ENCODE measurements at regions of chr3 and their contacts with region 1.

Region 1: GRCh38 chr3:85740561-85740960 is 781.8 kb downstream of the CADM2 start:
- DNase-seq: no peak
- ATAC-seq: no peak
- H3K4me3 ChIP-seq: no peak overlapping the region
- H3K27ac ChIP-seq: no peak overlapping the region
- H3K4me1 ChIP-seq: no peaks in the 10 kb centered on the region
- H3K27me3 ChIP-seq: no peaks in the 10 kb centered on the region
- CTCF ChIP-seq: no peak

Region 2: DNA sequence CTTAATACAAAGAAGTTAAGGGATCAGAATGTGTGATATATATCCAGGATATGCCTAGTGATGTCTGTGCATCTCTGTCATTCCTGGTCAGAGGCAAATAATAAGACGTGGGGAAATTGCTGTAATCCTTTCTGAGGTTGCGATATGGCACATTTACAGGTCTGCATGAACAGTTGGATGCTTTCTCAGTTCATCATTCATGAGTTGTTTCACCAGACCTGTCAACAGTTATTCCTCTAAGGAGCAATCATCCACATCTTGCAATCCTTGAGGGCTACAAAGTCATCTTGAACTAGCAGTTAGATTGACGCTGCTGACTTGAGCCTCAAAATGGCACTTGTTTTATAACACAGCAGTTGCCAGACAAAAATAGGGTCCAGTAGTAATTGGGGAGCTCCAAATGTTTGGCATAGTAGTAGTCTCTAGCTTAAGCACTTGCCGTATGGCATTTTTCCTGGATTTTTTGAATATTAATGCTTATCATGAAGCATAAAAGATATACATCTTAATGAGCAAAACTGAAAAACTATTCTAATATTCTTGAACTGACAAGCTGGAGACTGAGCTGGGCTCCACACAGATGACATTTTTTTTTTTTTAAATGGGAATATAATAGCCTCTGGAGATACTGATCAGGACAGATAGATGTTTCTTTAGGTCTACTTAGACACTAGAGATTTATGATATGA is 488.7 kb after region 1 on chr3:
- CTCF ChIA-PET with region 1: no interaction called
- POLR2A ChIA-PET with region 1: no interaction called
- in situ Hi-C with region 1: no loop called
- intact Hi-C with region 1: loop called (anchors 5 kb)
- DNase-seq: no peak
- ATAC-seq: no peak
- H3K4me3 ChIP-seq: no peak overlapping the region
- H3K27ac ChIP-seq: no peak overlapping the region
- H3K4me1 ChIP-seq: no peaks in the 10 kb centered on the region
- H3K27me3 ChIP-seq: no peaks in the 10 kb centered on the region
- CTCF ChIP-seq: no peak

Measured in Panc1 (cell line).